ENCODE measurements at regions of chr10 and their contacts with region 1.

Region 1: DNA sequence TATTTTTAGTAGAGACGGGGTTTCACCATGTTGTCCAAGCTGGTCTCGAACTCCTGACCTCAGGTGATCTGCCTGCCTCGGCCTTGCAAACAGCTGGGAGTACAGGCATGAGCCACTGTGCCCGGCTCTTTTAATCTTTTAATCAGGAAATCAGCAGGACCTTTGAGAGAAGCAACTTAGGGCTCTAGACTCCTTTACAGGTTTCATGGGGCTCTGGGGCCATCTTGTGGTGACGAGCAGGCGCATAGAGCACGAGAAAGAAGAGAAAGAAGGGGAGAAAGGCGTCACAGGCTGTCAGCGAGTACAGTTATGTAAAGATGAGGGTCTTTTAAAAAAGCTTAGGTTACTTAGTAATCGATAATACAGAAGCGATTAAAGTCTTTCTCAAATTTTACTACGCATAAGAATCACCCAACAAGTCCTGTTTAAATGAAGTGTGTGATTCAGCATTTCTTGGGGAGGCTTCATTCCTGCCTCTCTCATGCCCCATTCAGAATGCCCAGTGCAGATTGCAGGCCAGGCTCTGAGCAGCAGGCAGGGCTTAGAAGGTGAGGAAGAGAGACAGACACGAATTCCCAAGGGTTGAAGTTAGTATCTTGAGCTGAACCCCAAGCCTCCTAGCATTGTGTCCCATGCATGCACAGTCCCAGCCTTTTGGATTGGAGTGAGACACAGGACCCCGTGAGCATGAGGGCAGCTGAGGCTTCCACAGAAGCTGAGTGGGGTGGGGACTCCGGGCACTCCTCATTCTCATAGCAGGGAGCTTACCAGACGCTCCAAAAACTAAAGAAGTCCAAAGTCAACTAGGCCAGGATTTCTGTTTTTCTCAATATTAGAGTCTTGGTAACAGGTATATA is 23.6 kb upstream of the PFKP start:
- DNase-seq: peak; percentile 82 to 89
- ATAC-seq: peak; percentile 78 to 87
- H3K4me3 ChIP-seq: no peak overlapping the region
- H3K27ac ChIP-seq: peak overlapping the region; percentile 70 to 89
- H3K4me1 ChIP-seq: peaks cover 43% of the 10 kb centered on the region
- CTCF ChIP-seq: peak; percentile 91
- EP300 ChIP-seq: no peak
- POLR2A ChIP-seq: no peak
- RAD21 ChIP-seq: peak; percentile 96 to 99

Region 2: GRCh38 chr10:1109795-1110673 is 1933.7 kb before region 1 on chr10:
- CTCF ChIA-PET with region 1: interaction called, 13 read pairs
- POLR2A ChIA-PET with region 1: no interaction called
- DNase-seq: peak; percentile 81 to 89
- ATAC-seq: peak; percentile 96
- H3K4me3 ChIP-seq: no peak overlapping the region
- H3K27ac ChIP-seq: peak overlapping the region in 1 of 2 experiments; percentile 57; a peak in 3 of 6 replicates
- H3K4me1 ChIP-seq: peaks cover 10% of the 10 kb centered on the region
- CTCF ChIP-seq: peak; percentile 67
- EP300 ChIP-seq: no peak
- POLR2A ChIP-seq: no peak
- RAD21 ChIP-seq: peak; percentile 72 to 74; a peak in 4 of 5 replicates

Region 3: DNA sequence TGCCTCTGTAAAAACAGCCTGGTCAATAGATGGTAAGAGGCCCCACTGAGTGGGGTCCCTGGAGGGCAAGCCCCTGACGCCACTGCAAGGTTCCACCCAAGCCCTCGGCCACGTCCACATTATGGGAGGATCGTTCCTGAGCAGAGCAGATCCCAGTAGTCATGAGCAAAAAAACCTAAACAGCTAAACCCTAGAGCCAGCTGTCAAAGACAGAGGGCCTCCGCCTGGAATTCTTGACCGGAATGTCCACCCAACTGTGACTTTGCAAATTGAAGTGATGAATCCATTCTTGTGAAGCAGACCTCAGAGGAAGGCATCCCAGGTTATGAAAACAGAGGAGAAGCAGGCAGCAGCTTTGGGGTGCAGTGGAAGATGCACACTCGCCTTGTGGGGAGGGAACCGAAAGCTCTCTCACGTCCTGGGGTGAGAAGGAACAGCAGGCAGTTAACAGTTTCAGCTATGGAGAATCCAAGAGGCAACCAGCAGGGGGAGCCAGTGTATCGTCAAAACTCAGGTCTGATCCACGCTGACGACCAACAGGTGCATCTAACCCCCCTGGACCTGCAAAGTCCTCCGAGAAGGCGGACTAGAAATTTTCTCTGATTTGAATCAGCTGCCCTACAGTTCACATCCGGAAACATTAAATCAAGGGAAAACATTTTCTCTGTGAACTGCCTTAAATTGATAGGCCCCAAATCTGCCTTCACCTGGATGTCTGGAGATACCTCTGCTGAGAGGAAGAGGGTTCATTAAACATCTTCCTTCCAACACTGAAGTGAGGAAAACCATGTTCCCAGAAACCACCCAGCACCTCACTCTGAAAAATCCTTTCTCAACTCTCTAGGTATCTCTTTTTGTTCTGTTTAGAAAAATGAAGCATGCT is 115.5 kb before region 1 on chr10:
- CTCF ChIA-PET with region 1: interaction called, 212 read pairs
- POLR2A ChIA-PET with region 1: no interaction called
- DNase-seq: peak; percentile 71 to 92
- ATAC-seq: peak; percentile 91 to 95
- H3K4me3 ChIP-seq: no peak overlapping the region
- H3K27ac ChIP-seq: no peak overlapping the region
- H3K4me1 ChIP-seq: peaks cover under 1% of the 10 kb centered on the region; the same call in 2 of the 3 replicates
- CTCF ChIP-seq: peak; percentile 86
- EP300 ChIP-seq: no peak
- POLR2A ChIP-seq: no peak
- RAD21 ChIP-seq: peak; percentile 90 to 93

Region 4: DNA sequence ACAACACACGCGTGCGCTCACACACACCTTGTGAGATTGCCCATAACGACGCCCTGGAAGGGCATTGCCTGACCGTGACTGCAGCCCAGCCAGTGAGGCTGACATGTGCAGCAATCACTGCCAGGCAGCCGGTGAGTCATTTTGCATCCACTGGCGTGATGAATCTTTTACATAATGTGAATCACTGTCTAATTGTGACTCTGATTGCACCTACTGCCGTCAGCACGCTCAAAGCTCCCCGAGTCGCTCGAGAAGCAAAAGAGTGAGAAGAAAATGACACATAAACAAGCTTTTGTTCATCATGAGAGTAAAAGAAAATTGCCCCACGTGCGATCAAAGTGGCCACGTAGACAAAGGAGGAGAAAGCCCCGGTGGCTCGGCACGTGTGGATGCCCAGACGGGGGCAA is 93.8 kb before region 1 on chr10:
- CTCF ChIA-PET with region 1: interaction called, 43 read pairs
- POLR2A ChIA-PET with region 1: no interaction called
- DNase-seq: peak; percentile 26 to 27
- ATAC-seq: peak; percentile 82 to 86
- H3K4me3 ChIP-seq: peak overlapping the region; percentile 34
- H3K27ac ChIP-seq: peak overlapping the region in 1 of 2 experiments; percentile 9; a peak in 3 of 6 replicates
- H3K4me1 ChIP-seq: peaks cover 10% of the 10 kb centered on the region
- CTCF ChIP-seq: no peak
- EP300 ChIP-seq: no peak
- POLR2A ChIP-seq: no peak
- RAD21 ChIP-seq: no peak

Region 5: DNA sequence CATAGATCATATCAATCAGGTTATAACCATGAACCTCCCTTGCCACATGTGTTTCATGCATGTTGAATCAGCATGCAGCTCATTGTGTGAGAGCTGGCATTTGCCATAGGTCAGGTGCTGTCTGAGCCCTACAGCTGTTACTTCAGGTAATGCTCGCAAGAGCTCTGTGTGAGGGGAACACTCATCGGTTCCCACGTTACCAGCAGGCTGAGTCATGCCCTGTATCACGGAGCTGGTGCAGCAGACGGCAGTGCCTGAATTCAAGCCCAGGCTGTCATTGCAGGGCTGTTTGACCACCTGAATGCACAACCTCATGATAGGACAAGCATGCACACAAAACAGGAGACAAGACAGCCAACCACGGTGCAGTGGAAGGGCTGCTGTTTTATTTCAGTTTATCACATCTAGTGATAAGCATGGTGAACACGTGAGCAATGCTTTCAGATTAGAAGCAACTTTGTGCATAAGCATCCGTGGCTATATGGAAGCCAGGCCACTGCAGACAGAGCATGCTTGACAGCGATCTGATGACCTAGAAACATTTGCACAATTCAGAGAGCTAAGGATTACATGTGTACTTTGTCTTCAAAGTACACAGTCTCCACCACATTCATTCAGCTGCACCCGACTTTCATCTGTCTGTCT is 32.8 kb before region 1 on chr10:
- CTCF ChIA-PET with region 1: interaction called, 12 read pairs
- POLR2A ChIA-PET with region 1: no interaction called
- DNase-seq: no peak
- ATAC-seq: peak; percentile 45 to 49; a peak in 3 of 6 replicates
- H3K4me3 ChIP-seq: no peak overlapping the region
- H3K27ac ChIP-seq: no peak overlapping the region
- H3K4me1 ChIP-seq: no peaks in the 10 kb centered on the region
- CTCF ChIP-seq: no peak
- EP300 ChIP-seq: no peak
- POLR2A ChIP-seq: no peak
- RAD21 ChIP-seq: no peak

Region 6: GRCh38 chr10:3054183-3054850 is 10.6 kb after region 1 on chr10:
- CTCF ChIA-PET with region 1: interaction called, 46 read pairs
- POLR2A ChIA-PET with region 1: no interaction called
- DNase-seq: no peak
- ATAC-seq: no peak
- H3K4me3 ChIP-seq: no peak overlapping the region
- H3K27ac ChIP-seq: no peak overlapping the region
- H3K4me1 ChIP-seq: peaks cover 14% of the 10 kb centered on the region
- CTCF ChIP-seq: no peak
- EP300 ChIP-seq: no peak
- POLR2A ChIP-seq: no peak
- RAD21 ChIP-seq: no peak

Region 7: DNA sequence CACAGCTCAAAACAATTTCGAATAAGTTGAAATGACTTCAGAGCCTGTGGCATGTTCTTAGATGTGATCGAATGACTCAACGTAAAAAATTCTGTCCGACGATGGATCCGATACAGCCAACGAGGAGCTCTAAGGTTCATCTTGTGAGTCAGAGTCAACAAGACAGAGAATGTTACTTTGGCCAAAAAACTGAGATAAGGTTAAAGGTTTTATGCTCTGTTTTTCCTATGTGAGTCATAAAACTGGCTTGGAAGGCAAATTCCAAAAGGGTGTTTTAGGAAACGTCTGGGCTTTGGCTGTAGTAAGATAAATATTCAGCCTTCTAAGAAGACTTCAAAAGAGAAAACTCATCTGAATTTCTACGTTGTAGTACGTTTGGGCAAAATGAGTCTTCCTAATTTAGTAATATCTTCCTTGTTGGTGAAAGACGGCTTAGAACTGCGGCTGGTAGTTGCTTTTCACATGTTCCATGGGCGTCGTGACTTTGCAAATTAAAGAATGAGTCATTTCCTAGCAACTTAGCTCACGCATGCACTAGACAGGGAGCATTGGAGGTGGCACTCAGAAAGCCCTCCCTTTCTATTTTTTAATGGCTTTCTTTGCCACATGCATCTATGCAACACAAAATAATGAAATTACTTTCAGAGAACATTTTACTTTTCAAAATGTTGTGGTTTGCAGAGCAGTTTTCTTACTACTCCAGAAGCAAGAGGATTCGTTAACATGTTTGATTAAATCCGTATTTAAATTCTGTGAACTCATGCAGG is 51.8 kb after region 1 on chr10:
- CTCF ChIA-PET with region 1: interaction called, 19 read pairs
- POLR2A ChIA-PET with region 1: no interaction called
- DNase-seq: peak; percentile 92 to 98
- ATAC-seq: peak; percentile 71 to 82
- H3K4me3 ChIP-seq: peak overlapping the region; percentile 29
- H3K27ac ChIP-seq: peak overlapping the region; percentile 92 to 99
- H3K4me1 ChIP-seq: peaks cover 90% of the 10 kb centered on the region
- CTCF ChIP-seq: no peak
- EP300 ChIP-seq: peak; percentile 91 to 97; a peak in 4 of 5 replicates
- POLR2A ChIP-seq: no peak
- RAD21 ChIP-seq: peak in 1 of 2 experiments; percentile 7; a peak in 1 of 5 replicates

Measured in A549 (cell line).